Activated naive CD4-positive, alpha-beta T cell treated with anti-CD3 and anti-CD28 coated beads for 36 hours (primary cell): ENCODE measurements at regions of chr18 and their contacts with region 1.

Region 1: DNA sequence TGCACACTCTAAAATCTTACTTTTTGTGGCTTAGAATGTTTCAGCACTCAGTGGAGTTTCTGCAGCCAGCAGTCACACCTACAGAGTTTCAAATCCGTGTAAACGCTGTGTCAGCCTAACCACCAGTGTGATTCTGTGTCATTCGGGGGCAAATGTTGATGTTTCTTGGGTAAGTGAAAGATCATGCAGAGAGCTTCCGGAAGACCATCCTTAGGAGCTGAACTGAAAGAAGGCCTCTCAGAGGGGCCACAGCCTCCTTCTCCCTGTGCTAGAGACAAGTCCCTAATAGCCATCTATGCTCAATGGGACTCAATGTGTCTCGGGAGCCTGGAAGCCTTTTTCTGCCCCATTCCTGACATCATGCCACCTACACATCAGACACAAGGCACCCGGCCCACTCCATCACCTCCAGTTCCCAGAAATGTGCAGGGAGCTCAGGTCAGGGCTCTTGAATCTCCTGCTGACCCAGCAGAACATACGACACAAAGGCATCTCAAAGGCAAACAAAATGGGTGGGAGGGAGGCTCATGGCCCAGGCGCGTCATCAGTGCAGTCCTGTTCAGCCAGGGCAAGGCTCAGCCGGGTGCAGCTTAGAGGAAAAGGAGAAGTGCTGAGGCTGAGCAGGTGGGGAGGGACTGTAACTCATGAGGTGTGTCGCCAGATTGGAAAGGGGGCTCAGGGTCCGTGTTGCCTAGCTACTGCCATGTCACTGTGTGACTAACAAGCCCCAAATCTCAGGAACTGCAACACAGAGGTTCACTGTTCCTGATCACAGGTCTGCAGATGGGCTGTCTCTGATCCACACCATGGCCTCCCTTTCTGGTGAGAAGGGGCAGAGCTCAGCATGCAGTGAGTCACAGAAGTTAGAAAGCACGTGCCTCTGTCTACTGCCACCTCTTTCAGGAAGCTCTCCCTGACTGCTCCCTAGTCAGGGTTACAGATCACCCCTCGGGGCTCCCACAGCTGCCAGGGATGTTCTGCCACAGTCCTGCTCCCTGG is 82.0 kb downstream of the SMAD7 start:
- DNase-seq: peak; percentile 69
- H3K4me3 Mint-ChIP-seq: no peak overlapping the region
- H3K27ac Mint-ChIP-seq: peak overlapping the region; percentile 48
- H3K4me1 Mint-ChIP-seq: peaks cover 22% of the 10 kb centered on the region
- H3K27me3 Mint-ChIP-seq: no peaks in the 10 kb centered on the region

Region 2: GRCh38 chr18:48800876-48801727 is 67.7 kb before region 1 on chr18:
- CTCF ChIA-PET with region 1: no interaction called
- intact Hi-C with region 1: loop called (anchors 5 kb)
- DNase-seq: peak; percentile 37
- H3K4me3 Mint-ChIP-seq: no peak overlapping the region
- H3K27ac Mint-ChIP-seq: peak overlapping the region; percentile 57
- H3K4me1 Mint-ChIP-seq: peaks cover 45% of the 10 kb centered on the region
- H3K27me3 Mint-ChIP-seq: no peaks in the 10 kb centered on the region

Region 3: DNA sequence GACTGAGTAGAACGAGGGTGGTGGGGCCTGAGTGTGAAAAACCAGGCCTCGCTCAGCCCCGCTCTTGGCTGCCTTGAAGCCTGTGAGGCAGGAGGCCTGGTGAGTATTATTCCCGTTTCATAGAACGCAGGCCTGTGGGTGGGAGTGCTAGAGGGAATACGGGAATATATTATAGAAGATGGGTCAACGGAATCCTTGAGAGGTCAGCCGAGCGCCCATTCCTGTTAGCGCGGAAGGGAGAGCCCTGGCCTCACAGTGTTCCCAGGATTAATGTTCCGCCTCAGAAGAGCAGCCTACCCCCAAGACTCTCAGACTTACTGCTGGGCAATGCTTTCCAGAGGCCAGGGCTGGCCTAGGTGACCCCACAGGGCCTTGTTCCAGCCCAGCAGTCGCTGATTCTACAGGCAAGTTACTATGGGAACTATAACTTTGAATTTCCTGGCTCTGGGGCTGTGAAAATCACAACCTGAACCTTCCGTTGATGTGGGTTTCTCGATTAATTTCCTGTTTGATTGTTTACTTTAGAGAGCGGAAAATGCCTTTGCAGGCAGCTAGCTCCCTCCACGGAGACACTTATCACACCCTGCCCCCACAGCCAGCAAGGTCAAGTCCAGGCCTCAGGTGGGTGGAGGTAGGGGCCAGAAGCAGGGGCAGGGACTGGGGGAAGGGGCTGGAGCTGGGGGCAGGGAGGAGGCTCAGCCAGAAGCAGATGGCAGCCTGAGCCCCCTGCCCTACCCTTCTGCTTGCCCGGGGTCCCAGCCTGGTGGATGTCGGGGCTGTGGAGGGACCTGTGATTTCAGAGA is 26.3 kb before region 1 on chr18:
- CTCF ChIA-PET with region 1: no interaction called
- intact Hi-C with region 1: loop called (anchors 2 kb)
- DNase-seq: peak; percentile 64
- H3K4me3 Mint-ChIP-seq: no peak overlapping the region
- H3K27ac Mint-ChIP-seq: peak overlapping the region; percentile 59
- H3K4me1 Mint-ChIP-seq: peaks cover 53% of the 10 kb centered on the region
- H3K27me3 Mint-ChIP-seq: no peaks in the 10 kb centered on the region

Region 4: DNA sequence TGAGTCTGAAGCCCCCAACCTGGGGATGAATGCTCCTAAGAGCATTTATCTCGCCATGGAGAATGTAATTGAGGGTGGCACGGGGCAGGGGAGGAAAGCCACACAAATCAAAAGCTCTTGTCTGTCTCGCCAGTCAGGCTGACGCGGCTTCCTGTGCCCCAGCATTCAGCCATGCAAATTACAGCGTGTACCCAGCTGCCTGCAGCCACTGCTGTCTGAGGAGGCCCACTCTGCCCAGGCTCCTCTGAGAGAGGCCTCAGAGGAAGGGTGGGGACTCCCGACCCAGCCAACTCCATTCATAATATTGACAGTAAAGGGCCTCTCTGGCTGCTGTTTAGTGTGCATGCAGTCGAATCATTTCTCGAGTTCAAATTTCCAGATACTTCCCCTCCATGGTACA is 60.0 kb after region 1 on chr18:
- CTCF ChIA-PET with region 1: no interaction called
- intact Hi-C with region 1: loop called (anchors 2 kb)
- DNase-seq: peak; percentile 88
- H3K4me3 Mint-ChIP-seq: peak overlapping the region; percentile 66
- H3K27ac Mint-ChIP-seq: peak overlapping the region; percentile 87
- H3K4me1 Mint-ChIP-seq: peaks cover 93% of the 10 kb centered on the region
- H3K27me3 Mint-ChIP-seq: no peaks in the 10 kb centered on the region

Region 5: GRCh38 chr18:49544362-49544761 is 675.6 kb after region 1 on chr18:
- CTCF ChIA-PET with region 1: no interaction called
- intact Hi-C with region 1: no loop called
- DNase-seq: no peak
- H3K4me3 Mint-ChIP-seq: no peak overlapping the region
- H3K27ac Mint-ChIP-seq: no peak overlapping the region
- H3K4me1 Mint-ChIP-seq: no peaks in the 10 kb centered on the region
- H3K27me3 Mint-ChIP-seq: peaks cover 3% of the 10 kb centered on the region